CD4-positive, alpha-beta memory T cell (primary cell): ENCODE measurements at regions of chr1 and their contacts with region 1.

Region 1: GRCh38 chr1:202160377-202160940 is at the start of gene PTPN7:
- DNase-seq: peak; percentile 73 to 87 (median 78)
- H3K4me3 ChIP-seq: peak within 1 kb of the TSS; percentile 89 to 93
- H3K4me3 Mint-ChIP-seq: peak within 1 kb of the TSS; percentile 92 to 98 (median 96)
- H3K27ac ChIP-seq: peak within 1 kb of the TSS; percentile 93
- H3K27ac Mint-ChIP-seq: peak within 1 kb of the TSS; percentile 94 to 99 (median 99)
- H3K4me1 ChIP-seq: peaks cover 91% of the 10 kb centered on the region
- H3K4me1 Mint-ChIP-seq: peaks cover 55 to 97% (median 75%) of the 10 kb centered on the region in 4 donors
- H3K27me3 ChIP-seq: no peaks in the 10 kb centered on the region
- H3K27me3 Mint-ChIP-seq: no peaks in the 10 kb centered on the region
- total RNA-seq, gene PTPN7: 67.6 to 68.4 TPM

Region 2: DNA sequence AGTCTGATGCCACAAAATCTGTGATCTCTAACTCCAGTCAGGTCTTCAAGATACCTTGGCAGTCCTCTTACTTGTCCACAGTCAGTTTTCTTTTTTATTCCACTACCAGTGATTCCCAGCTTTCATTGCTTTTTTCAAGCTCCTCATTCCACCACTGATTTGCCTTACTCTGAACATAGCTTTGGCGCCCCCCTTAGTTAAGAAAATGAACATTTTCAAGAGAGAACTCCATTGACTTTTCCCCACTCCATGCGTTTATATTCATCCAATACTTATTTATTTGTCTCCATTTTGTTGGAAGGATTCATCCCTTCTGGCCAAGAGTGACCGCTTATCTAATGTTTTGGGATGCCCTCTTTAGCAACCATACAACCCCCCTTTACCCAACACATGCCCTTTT is 365.4 kb before region 1 on chr1:
- CTCF ChIA-PET with region 1: no interaction called
- POLR2A ChIA-PET with region 1: no interaction called
- intact Hi-C with region 1: no loop called
- DNase-seq: no peak
- H3K4me3 ChIP-seq: no peak overlapping the region
- H3K4me3 Mint-ChIP-seq: no peak overlapping the region
- H3K27ac ChIP-seq: no peak overlapping the region
- H3K27ac Mint-ChIP-seq: no peak overlapping the region
- H3K4me1 ChIP-seq: no peaks in the 10 kb centered on the region
- H3K4me1 Mint-ChIP-seq: no peaks in the 10 kb centered on the region
- H3K27me3 ChIP-seq: no peaks in the 10 kb centered on the region
- H3K27me3 Mint-ChIP-seq: no peaks in the 10 kb centered on the region

Region 3: DNA sequence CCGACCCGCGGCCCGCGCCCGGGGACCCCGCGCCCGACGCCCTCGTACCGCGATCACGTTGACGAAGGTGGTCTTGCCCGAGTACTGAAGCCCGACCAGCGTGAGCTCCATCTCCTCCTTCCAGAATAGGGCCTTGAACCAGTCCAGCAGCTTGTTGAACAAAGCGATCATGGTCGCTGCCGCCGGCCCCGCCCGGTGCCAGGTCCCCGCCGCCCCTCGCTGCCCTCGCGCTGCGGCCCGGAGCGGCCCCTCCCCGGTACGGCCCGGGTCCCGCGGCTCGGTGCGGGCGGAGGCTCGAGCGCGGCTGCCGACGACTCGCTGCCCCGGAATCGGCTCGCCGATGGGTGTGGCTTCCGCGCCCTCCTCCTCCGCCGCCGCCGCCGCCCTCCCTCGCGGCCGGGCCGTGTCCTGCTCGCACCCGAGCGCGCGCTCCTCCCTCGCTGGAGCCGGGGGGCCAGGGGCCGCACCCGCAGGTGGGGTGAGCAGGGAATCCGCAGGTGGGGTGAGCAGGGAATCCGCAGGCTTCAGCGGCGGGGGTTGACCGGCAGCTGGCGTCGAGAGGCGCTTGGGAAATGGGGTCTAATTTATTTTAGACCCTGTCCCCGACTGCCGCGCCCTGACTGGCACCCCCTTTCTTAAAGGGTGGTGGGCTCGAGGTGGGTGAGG is 15.9 kb before region 1 on chr1 and contains the start of gene ARL8A:
- CTCF ChIA-PET with region 1: interaction called, 15 read pairs
- POLR2A ChIA-PET with region 1: interaction called, 164 read pairs
- intact Hi-C with region 1: loop called (anchors 1 kb)
- DNase-seq: peak; percentile 61 to 71 (median 66)
- H3K4me3 ChIP-seq: peak within 1 kb of the TSS; percentile 62 to 94
- H3K4me3 Mint-ChIP-seq: peak within 1 kb of the TSS; percentile 92 to 98 (median 96)
- H3K27ac ChIP-seq: peak within 1 kb of the TSS; percentile 80
- H3K27ac Mint-ChIP-seq: peak within 1 kb of the TSS; percentile 86 to 97 (median 96)
- H3K4me1 ChIP-seq: peaks cover 41% of the 10 kb centered on the region
- H3K4me1 Mint-ChIP-seq: peaks cover 23 to 53% (median 35%) of the 10 kb centered on the region in 4 donors
- H3K27me3 ChIP-seq: no peaks in the 10 kb centered on the region
- H3K27me3 Mint-ChIP-seq: no peaks in the 10 kb centered on the region
- total RNA-seq, gene ARL8A: 48.1 to 55.0 TPM

Region 4: DNA sequence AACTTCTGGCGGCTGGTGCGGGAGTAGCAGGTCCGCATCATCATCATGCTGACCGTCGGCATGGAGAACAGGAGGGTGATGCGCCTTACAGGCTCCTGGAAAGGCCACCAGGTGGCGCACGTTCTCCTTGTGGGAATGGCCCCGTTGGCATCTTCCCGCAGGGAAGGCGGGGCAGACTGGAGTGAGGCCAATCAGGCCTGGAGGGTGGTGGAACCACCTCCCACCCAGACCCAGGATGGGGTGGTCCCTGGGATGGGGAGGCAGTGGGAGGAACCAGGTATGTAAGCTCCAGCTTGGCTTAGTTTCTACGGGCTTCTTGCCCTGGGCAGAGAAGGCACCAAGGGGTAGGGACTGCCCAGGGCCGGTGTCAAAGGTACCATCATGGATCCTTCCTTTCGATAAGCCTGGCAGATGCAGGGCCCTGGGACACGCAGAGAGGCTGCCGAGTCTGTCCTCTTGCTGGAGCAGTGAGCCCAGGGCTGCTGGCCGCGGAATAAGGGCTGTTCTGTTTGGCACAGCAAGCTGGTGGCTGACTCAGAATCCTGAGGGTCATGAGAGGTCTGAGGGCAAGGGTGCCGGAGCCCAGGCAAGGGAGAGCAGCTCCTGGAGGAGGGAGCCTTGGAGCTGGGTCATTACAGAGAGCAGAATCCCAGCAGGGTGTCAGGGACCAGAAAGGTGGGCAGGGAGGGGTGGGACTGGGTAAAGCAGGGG is 24.4 kb after region 1 on chr1:
- CTCF ChIA-PET with region 1: interaction called, 41 read pairs
- POLR2A ChIA-PET with region 1: interaction called, 3 read pairs
- intact Hi-C with region 1: loop called (anchors 2 kb)
- DNase-seq: peak; percentile 43 to 56 (median 50)
- H3K4me3 ChIP-seq: no peak overlapping the region
- H3K4me3 Mint-ChIP-seq: no peak overlapping the region
- H3K27ac ChIP-seq: no peak overlapping the region
- H3K27ac Mint-ChIP-seq: peak overlapping the region in 1 of 7 donors; percentile 29
- H3K4me1 ChIP-seq: peaks cover 5% of the 10 kb centered on the region
- H3K4me1 Mint-ChIP-seq: peaks cover 9 to 16% (median 13%) of the 10 kb centered on the region in 4 donors
- H3K27me3 ChIP-seq: no peaks in the 10 kb centered on the region
- H3K27me3 Mint-ChIP-seq: peaks cover 4 to 6% of the 10 kb centered on the region in 2 donors